ENCODE measurements at regions of chr21 and their contacts with region 1.

Region 1: DNA sequence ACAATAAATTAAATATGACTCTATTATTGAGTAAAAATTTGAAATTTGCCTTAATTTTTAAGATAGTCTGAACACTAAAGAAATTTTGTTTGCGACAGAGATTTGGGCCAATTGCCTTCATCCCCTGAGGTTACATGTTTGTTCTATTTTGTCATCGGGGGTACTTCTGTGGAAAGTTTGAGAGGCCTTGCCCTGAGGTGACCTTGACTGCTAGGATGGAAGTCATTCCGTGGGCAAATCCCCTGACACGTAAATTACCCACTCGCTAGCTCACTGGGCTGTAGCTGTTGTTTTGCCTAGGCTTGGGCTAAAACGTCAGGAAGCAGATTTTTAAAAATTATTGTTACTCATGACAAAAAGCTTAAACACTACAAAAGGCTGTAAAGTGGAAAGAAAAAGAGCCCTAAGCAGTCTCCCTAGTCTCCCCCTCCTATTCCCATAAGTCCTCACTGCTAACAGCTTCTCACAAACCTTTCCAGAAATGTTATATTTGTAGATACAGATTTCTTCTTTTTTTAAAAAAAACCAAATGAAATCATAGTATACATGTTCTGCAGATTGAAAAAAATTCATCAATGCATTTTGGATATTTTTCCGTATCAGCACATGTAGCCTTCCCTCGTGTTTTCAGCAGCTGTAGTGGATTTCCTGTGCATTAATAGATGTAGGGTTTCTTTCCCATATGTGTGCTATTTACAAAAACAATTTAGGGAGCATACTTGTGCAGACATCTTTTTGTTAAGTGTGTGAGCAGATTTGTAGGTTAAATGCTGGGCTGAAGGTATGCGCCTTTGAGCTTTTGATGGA is 142.7 kb downstream of the MRPS6 start:
- DNase-seq: no peak
- ATAC-seq: no peak
- H3K4me3 ChIP-seq: no peak overlapping the region
- H3K27ac ChIP-seq: no peak overlapping the region
- H3K4me1 ChIP-seq: no peaks in the 10 kb centered on the region
- H3K27me3 ChIP-seq: peaks cover 17% of the 10 kb centered on the region
- CTCF ChIP-seq: no peak

Region 2: GRCh38 chr21:34345091-34345871 is 129.2 kb after region 1 on chr21:
- CTCF ChIA-PET with region 1: no interaction called
- POLR2A ChIA-PET with region 1: no interaction called
- intact Hi-C with region 1: loop called (anchors 5 kb)
- DNase-seq: no peak
- ATAC-seq: no peak
- H3K4me3 ChIP-seq: no peak overlapping the region
- H3K27ac ChIP-seq: no peak overlapping the region
- H3K4me1 ChIP-seq: no peaks in the 10 kb centered on the region
- H3K27me3 ChIP-seq: no peaks in the 10 kb centered on the region
- CTCF ChIP-seq: no peak

Measured in PC-3 (cell line).